ENCODE measurements at regions of chr19 and their contacts with region 1.

Region 1: GRCh38 chr19:2328401-2329148 is at the starts of genes LSM7 and SPPL2B:
- DNase-seq: peak; percentile 87 to 95 (median 91)
- ATAC-seq: peak; percentile 85
- H3K4me3 ChIP-seq: peak within 1 kb of the TSS; percentile 95
- H3K4me3 Mint-ChIP-seq: peak within 1 kb of the TSS; percentile 94 to 100 (median 98)
- H3K27ac ChIP-seq: peak within 1 kb of the TSS; percentile 93
- H3K27ac Mint-ChIP-seq: peak within 1 kb of the TSS; percentile 91 to 100 (median 99)
- H3K4me1 ChIP-seq: peaks cover 10 to 48% of the 10 kb centered on the region in 2 donors
- H3K4me1 Mint-ChIP-seq: peaks cover 35 to 80% (median 62%) of the 10 kb centered on the region in 7 donors
- H3K27me3 ChIP-seq: no peaks in the 10 kb centered on the region
- H3K27me3 Mint-ChIP-seq: peaks cover 0 to 2% (median 0%) of the 10 kb centered on the region in 5 donors
- total RNA-seq, gene LSM7: 79.4 to 131 (median 102) TPM
- total RNA-seq, gene SPPL2B: 92.2 to 150 (median 140) TPM

Region 2: GRCh38 chr19:2269244-2269947 is 59.2 kb before region 1 on chr19:
- CTCF ChIA-PET with region 1: no interaction called
- POLR2A ChIA-PET with region 1: interaction called, 8 read pairs
- intact Hi-C with region 1: loop called in 1 of 2 experiments (anchors 2 kb)
- DNase-seq: peak; percentile 98 to 100 (median 99)
- ATAC-seq: peak; percentile 90
- H3K4me3 ChIP-seq: peak overlapping the region; percentile 96
- H3K4me3 Mint-ChIP-seq: peak overlapping the region; percentile 86 to 96 (median 90)
- H3K27ac ChIP-seq: peak overlapping the region; percentile 87
- H3K27ac Mint-ChIP-seq: peak overlapping the region; percentile 72 to 94 (median 89)
- H3K4me1 ChIP-seq: peaks cover 32 to 34% of the 10 kb centered on the region in 2 donors
- H3K4me1 Mint-ChIP-seq: peaks cover 28 to 52% (median 35%) of the 10 kb centered on the region in 7 donors
- H3K27me3 ChIP-seq: no peaks in the 10 kb centered on the region
- H3K27me3 Mint-ChIP-seq: no peaks in the 10 kb centered on the region

Region 3: DNA sequence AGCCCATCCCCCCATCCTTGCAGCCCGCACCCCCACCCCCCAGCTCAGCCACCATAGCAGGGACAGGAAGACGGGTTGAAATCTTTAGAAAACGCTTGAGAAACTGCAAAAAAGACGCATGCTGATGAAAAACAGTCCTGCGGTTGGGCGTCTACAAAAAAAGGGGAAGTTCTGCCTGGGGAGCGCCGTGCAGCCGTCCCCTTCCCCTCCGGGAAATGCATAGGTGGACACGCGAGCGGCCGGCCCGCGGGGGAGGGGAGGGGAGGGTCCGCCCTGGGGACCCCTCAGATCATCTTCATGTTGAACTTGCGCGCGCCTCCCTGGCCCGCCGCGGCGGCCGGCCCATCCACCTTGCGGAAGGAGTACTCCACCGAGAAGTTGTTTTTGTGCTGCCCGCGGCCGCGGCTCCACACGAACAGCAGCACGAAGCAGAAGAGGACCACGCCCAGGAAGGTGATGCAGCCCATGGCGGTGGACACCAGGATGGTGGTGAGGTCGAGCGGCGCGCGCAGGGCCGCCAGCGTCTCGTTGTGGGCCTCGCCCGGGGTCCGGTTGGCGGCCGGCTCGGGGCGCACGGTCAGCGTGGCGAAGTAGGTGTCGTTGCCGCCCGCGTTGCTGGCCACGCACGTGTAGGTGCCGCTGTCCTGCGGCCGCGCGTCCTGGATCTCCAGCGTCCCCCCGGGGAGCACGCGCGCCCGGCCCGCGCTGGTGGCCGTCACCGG is 38.7 kb before region 1 on chr19:
- CTCF ChIA-PET with region 1: interaction called, 4 read pairs
- POLR2A ChIA-PET with region 1: interaction called, 7 read pairs
- intact Hi-C with region 1: loop called in 1 of 2 experiments (anchors 2 kb)
- DNase-seq: peak; percentile 54 to 77 (median 66)
- ATAC-seq: peak; percentile 77
- H3K4me3 ChIP-seq: peak overlapping the region; percentile 74
- H3K4me3 Mint-ChIP-seq: peak overlapping the region; percentile 87 to 96 (median 91)
- H3K27ac ChIP-seq: peak overlapping the region; percentile 59
- H3K27ac Mint-ChIP-seq: peak overlapping the region; percentile 88 to 98 (median 92)
- H3K4me1 ChIP-seq: peaks cover 15 to 19% of the 10 kb centered on the region in 2 donors
- H3K4me1 Mint-ChIP-seq: peaks cover 22 to 42% (median 31%) of the 10 kb centered on the region in 7 donors
- H3K27me3 ChIP-seq: no peaks in the 10 kb centered on the region
- H3K27me3 Mint-ChIP-seq: no peaks in the 10 kb centered on the region

Region 4: GRCh38 chr19:2345794-2346663 is 17.5 kb after region 1 on chr19:
- CTCF ChIA-PET with region 1: no interaction called
- POLR2A ChIA-PET with region 1: no interaction called
- intact Hi-C with region 1: no loop called
- DNase-seq: no peak
- ATAC-seq: no peak
- H3K4me3 ChIP-seq: no peak overlapping the region
- H3K4me3 Mint-ChIP-seq: no peak overlapping the region
- H3K27ac ChIP-seq: no peak overlapping the region
- H3K27ac Mint-ChIP-seq: peak overlapping the region in 3 of 9 donors; percentile 29 to 67 (median 38)
- H3K4me1 ChIP-seq: no peaks in the 10 kb centered on the region
- H3K4me1 Mint-ChIP-seq: peaks cover 0 to 2% (median 0%) of the 10 kb centered on the region in 7 donors
- H3K27me3 ChIP-seq: no peaks in the 10 kb centered on the region
- H3K27me3 Mint-ChIP-seq: no peaks in the 10 kb centered on the region

Region 5: DNA sequence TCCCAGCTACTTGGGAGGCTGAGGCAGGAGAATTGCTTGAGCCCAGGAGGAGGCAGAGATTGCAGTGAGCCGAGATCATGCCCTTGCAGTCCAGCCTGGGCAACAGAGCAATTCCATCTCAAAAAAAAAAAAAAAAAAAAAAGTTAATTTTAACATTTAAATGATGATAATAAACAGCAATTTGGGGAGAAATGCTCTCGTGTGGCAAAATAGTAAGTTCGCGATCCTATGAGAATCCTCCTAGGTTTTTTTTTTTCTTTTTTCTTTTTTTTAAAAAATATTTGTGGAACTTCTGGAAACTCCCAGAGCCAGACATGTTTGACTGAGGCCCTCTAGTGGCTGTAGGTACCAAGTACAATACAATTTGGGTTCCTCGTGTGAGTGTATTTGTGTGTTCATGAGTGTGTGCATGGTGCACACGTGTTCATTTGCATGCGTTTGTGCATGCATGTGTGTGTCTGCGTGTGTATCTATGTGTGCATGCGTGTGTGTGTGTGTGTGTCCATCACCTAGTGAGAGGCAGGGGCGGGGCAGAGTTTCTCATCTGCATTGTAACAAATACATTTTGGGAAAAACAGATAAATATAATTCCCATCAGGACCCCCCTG is 62.6 kb after region 1 on chr19:
- CTCF ChIA-PET with region 1: interaction called, 3 read pairs
- POLR2A ChIA-PET with region 1: interaction called, 7 read pairs
- intact Hi-C with region 1: loop called (anchors 2 to 5 kb)
- DNase-seq: peak in 7 of 9 donors; percentile 26 to 59 (median 46)
- ATAC-seq: peak; percentile 88
- H3K4me3 ChIP-seq: no peak overlapping the region
- H3K4me3 Mint-ChIP-seq: no peak overlapping the region
- H3K27ac ChIP-seq: no peak overlapping the region
- H3K27ac Mint-ChIP-seq: peak overlapping the region in 2 of 9 donors; percentile 1 to 91
- H3K4me1 ChIP-seq: no peaks in the 10 kb centered on the region
- H3K4me1 Mint-ChIP-seq: peaks cover 4 to 16% (median 5%) of the 10 kb centered on the region in 7 donors
- H3K27me3 ChIP-seq: no peaks in the 10 kb centered on the region
- H3K27me3 Mint-ChIP-seq: peaks cover 0 to 13% (median 0%) of the 10 kb centered on the region in 5 donors

Region 6: DNA sequence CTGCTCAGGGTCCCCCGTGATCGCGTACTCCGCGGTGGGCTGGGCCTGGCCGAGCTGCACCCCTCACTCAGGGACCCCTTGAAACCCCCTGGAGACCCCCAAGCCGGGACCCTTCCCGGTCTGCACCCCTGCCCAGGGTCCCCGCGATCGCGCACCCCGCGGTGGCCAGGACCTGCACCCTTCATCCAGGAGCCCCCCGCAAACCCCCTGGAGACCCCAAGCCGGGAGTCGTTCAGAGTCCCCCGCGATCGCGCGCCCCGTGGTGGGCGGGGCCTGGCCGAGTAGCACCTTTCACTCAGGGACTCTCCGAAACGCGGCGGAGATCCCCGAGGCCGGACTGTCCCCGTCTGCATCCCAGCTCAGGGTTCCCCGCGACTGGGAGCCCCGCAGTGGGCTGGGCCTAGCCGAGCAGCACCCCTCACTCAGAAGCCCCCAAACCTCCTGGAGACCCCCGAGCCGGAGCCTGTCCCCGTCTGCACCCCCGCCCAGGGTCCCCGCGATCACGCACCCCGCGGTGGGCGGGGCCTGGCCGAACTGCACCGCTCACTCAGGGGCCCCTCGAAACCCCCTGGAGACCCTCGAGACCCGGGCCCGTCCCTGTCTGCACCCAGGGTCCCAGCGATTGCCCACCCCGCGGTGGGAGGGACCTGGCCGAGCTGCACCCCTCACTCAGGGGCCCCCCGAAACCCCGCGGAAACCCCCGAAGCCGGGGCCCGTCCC is 127.4 kb after region 1 on chr19:
- CTCF ChIA-PET with region 1: no interaction called
- POLR2A ChIA-PET with region 1: no interaction called
- intact Hi-C with region 1: loop called in 1 of 2 experiments (anchors 1 kb)
- DNase-seq: peak in 5 of 9 donors; percentile 14 to 68 (median 29)
- ATAC-seq: peak; percentile 59
- H3K4me3 ChIP-seq: peak overlapping the region; percentile 79
- H3K4me3 Mint-ChIP-seq: peak overlapping the region; percentile 77 to 90 (median 84)
- H3K27ac ChIP-seq: peak overlapping the region; percentile 86
- H3K27ac Mint-ChIP-seq: peak overlapping the region in 6 of 9 donors; percentile 77 to 88 (median 82)
- H3K4me1 ChIP-seq: peaks cover 14 to 18% of the 10 kb centered on the region in 2 donors
- H3K4me1 Mint-ChIP-seq: peaks cover 14 to 28% (median 18%) of the 10 kb centered on the region in 7 donors
- H3K27me3 ChIP-seq: no peaks in the 10 kb centered on the region
- H3K27me3 Mint-ChIP-seq: no peaks in the 10 kb centered on the region

Measured in naive thymus-derived CD4-positive, alpha-beta T cell (primary cell).